SK-N-SH (cell line): ENCODE measurements at regions of chr20 and their contacts with region 1.

Region 1: GRCh38 chr20:38645980-38646858 is 44.6 kb downstream of the ARHGAP40 start:
- DNase-seq: peak; percentile 93
- H3K4me3 ChIP-seq: peak overlapping the region; percentile 32 to 51; a peak in 2 of 4 replicates
- H3K27ac ChIP-seq: no peak overlapping the region
- H3K4me1 ChIP-seq: peaks cover 0 to 7% of the 10 kb centered on the region in 2 experiments; a peak in 1 of 4 replicates
- H3K27me3 ChIP-seq: peaks cover 42% of the 10 kb centered on the region
- CTCF ChIP-seq: peak; percentile 88
- EP300 ChIP-seq: no peak
- RAD21 ChIP-seq: peak; percentile 91

Region 2: DNA sequence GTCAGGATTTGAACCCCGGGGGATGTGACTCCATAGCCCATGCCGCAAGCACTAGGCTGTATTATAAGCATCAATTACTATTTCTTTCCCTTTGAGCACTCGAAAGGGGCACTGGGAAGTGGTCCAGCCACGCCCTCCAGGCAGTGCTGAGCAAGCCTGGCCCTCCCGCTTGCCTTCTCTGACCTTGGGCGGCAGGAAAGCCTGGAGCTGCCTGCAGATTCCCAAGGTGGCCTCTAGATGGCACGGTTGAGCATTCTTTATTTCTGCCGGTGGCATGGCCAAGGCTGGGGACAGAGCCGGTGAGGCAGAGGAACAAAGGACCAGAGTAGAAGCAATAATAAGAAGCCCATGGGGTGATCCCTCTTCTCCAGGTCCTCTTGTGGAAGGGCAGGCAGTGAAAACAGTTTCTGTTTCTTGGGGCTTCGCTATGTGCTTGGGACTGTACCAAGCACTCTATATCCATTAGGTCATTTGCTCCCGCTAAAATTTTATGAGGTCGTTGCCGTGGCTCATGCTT is 12.6 kb before region 1 on chr20:
- CTCF ChIA-PET with region 1: interaction called, 59 read pairs
- POLR2A ChIA-PET with region 1: no interaction called
- DNase-seq: peak; percentile 86
- H3K4me3 ChIP-seq: no peak overlapping the region; a peak in 1 of 4 replicates
- H3K27ac ChIP-seq: no peak overlapping the region
- H3K4me1 ChIP-seq: no peaks in the 10 kb centered on the region
- H3K27me3 ChIP-seq: no peaks in the 10 kb centered on the region
- CTCF ChIP-seq: peak; percentile 78
- EP300 ChIP-seq: no peak
- RAD21 ChIP-seq: peak; percentile 67

Region 3: GRCh38 chr20:38665094-38665865 is 19.1 kb after region 1 on chr20:
- CTCF ChIA-PET with region 1: interaction called, 87 read pairs
- POLR2A ChIA-PET with region 1: no interaction called
- DNase-seq: peak; percentile 52
- H3K4me3 ChIP-seq: no peak overlapping the region
- H3K27ac ChIP-seq: no peak overlapping the region
- H3K4me1 ChIP-seq: peaks cover 0 to 20% of the 10 kb centered on the region in 2 experiments; a peak in 1 of 4 replicates
- H3K27me3 ChIP-seq: peaks cover 6% of the 10 kb centered on the region
- CTCF ChIP-seq: no peak
- EP300 ChIP-seq: no peak
- RAD21 ChIP-seq: no peak

Region 4: DNA sequence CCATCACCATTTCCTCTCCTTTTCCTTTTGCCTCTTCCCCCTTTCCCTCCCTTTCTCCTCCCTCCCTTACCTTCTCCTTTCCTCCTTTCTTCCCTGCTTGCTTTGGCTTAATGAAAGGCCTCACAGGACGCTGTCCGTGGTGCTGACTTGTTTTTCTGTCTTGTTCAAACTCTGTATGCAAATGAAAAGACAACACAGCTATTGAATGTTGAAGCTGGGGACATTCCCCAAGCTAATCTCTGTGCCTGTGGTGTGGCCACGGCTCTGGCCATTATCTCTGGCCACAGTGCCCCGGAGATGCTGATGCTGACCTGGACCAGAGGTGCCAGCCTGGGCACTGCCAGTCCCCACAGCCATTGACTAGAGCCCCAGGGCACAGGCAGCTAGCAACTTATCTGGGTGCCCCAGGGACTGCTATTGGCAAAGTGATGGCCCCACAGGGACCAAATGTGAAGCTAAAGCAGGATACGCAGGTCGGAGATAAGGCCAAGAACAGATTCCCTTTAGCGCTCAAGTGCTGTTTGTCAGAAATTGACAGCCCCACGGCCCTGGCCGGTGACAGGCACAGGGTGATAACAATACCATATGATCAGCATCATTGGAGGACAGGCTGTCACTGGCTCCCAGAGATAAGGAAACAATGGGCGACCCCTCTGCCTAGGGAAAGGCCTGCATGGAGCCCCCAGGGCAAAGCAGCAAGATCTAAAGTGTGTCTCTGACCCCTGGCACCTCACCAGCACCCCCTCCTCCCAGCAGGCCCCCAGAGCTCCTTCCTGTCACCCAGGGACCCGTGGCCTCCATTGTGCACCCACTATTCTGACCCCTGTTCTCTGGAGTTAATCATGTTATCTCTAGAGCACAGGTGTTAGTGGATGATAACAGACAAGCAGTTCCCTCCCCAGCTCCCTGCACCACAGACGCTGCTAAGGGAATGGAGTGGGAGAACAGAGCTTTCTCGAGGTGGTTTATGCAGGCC is 46.5 kb after region 1 on chr20:
- CTCF ChIA-PET with region 1: interaction called, 30 read pairs
- POLR2A ChIA-PET with region 1: no interaction called
- DNase-seq: peak; percentile 73
- H3K4me3 ChIP-seq: no peak overlapping the region
- H3K27ac ChIP-seq: peak overlapping the region in 1 of 2 experiments; percentile 58; a peak in 2 of 4 replicates
- H3K4me1 ChIP-seq: peaks cover 0 to 20% of the 10 kb centered on the region in 2 experiments; a peak in 1 of 4 replicates
- H3K27me3 ChIP-seq: no peaks in the 10 kb centered on the region
- CTCF ChIP-seq: no peak
- EP300 ChIP-seq: peak in 1 of 2 experiments; percentile 75; a peak in 2 of 4 replicates
- RAD21 ChIP-seq: no peak

Region 5: GRCh38 chr20:38714308-38714707 is 68.1 kb after region 1 on chr20:
- CTCF ChIA-PET with region 1: interaction called, 26 read pairs
- POLR2A ChIA-PET with region 1: no interaction called
- DNase-seq: no peak
- H3K4me3 ChIP-seq: no peak overlapping the region
- H3K27ac ChIP-seq: no peak overlapping the region
- H3K4me1 ChIP-seq: no peaks in the 10 kb centered on the region
- H3K27me3 ChIP-seq: peaks cover 12% of the 10 kb centered on the region
- CTCF ChIP-seq: no peak
- EP300 ChIP-seq: no peak
- RAD21 ChIP-seq: no peak

Region 6: DNA sequence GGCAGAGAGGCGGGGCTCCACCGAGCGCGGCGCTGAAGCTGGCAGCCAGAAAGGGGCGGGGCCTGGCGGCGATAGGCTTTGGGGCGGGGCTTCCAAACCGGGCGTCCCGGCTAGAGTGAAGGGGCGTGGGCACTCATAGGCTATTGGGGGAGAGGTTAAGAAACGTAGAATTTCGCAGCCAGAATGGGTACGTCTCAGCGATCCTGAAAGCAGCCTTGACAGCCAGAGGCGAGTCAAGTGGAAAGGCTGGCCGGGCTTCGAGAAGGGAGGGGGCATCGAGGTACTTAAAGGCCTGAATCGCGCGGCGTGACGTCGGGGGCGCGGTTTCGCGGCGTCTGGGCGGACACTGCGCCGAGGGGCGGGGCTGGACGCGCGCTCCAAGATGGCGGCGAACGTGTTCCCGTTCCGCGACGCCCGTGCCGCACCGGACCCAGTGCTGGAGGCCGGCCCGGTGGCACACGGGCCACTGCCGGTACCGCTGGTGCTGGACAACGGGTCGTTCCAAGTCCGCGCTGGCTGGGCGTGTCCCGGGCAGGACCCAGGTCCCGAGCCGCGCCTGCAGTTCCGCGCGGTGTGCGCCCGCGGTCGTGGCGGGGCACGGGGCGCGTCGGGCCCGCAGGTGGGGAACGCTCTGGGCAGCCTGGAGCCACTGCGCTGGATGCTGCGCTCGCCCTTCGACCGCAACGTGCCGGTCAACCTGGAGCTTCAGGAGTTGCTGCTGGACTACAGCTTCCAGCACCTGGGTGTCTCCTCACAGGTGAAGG is 102.1 kb after region 1 on chr20 and contains the start of gene ACTR5:
- CTCF ChIA-PET with region 1: interaction called, 321 read pairs
- POLR2A ChIA-PET with region 1: no interaction called
- DNase-seq: peak; percentile 98
- H3K4me3 ChIP-seq: peak within 1 kb of the TSS; percentile 89 to 90
- H3K27ac ChIP-seq: peak within 1 kb of the TSS; percentile 84 to 89
- H3K4me1 ChIP-seq: peaks cover 0 to 14% of the 10 kb centered on the region in 2 experiments; a peak in 2 of 4 replicates
- H3K27me3 ChIP-seq: no peaks in the 10 kb centered on the region
- CTCF ChIP-seq: no peak
- EP300 ChIP-seq: no peak
- RAD21 ChIP-seq: no peak
- polyA plus RNA-seq, gene ACTR5: 9.7 and 10.9 TPM in 2 replicates

Region 7: GRCh38 chr20:39049684-39050554 is 403.7 kb after region 1 on chr20:
- CTCF ChIA-PET with region 1: interaction called, 46 read pairs
- POLR2A ChIA-PET with region 1: no interaction called
- DNase-seq: peak; percentile 92
- H3K4me3 ChIP-seq: peak overlapping the region; percentile 60 to 70
- H3K27ac ChIP-seq: peak overlapping the region in 1 of 2 experiments; percentile 53; a peak in 1 of 4 replicates
- H3K4me1 ChIP-seq: peaks cover 0 to 4% of the 10 kb centered on the region in 2 experiments; a peak in 1 of 4 replicates
- H3K27me3 ChIP-seq: no peaks in the 10 kb centered on the region; the same call in 1 of the 2 replicates
- CTCF ChIP-seq: peak; percentile 87
- EP300 ChIP-seq: no peak
- RAD21 ChIP-seq: peak; percentile 84